Heart right ventricle (tissue), 16 donors: ENCODE measurements at regions of chr9 and their contacts with region 1.

Region 1: GRCh38 chr9:38107811-38108304 is 38.8 kb upstream of the SHB start:
- DNase-seq: no peak
- ATAC-seq: no peak
- H3K4me3 ChIP-seq: no peak overlapping the region
- H3K27ac ChIP-seq: no peak overlapping the region
- H3K4me1 ChIP-seq: peaks cover 0 to 6% (median 0%) of the 10 kb centered on the region in 9 donors
- H3K27me3 ChIP-seq: peaks cover 0 to 8% (median 0%) of the 10 kb centered on the region in 7 donors
- CTCF ChIP-seq: no peak

Region 2: GRCh38 chr9:38068866-38069629 is 38.8 kb before region 1 on chr9 and contains the start of gene SHB:
- intact Hi-C with region 1: no loop called
- DNase-seq: peak; percentile 82 to 88
- ATAC-seq: peak; percentile 68 to 87 (median 76)
- H3K4me3 ChIP-seq: peak within 1 kb of the TSS; percentile 78 to 99 (median 95)
- H3K27ac ChIP-seq: peak within 1 kb of the TSS; percentile 87 to 99 (median 98)
- H3K4me1 ChIP-seq: peaks cover 3 to 57% (median 44%) of the 10 kb centered on the region in 9 donors
- H3K27me3 ChIP-seq: peaks cover 0 to 16% (median 0%) of the 10 kb centered on the region in 7 donors
- CTCF ChIP-seq: peak in 5 of 9 donors; percentile 2 to 47 (median 25)
- total RNA-seq, gene SHB: 13.9 to 26.6 (median 18.0) TPM

Region 3: GRCh38 chr9:38079461-38080031 is 28.3 kb before region 1 on chr9:
- intact Hi-C with region 1: no loop called
- DNase-seq: no peak
- ATAC-seq: peak in 3 of 8 donors; percentile 39 to 50 (median 40)
- H3K4me3 ChIP-seq: no peak overlapping the region
- H3K27ac ChIP-seq: peak overlapping the region in 1 of 10 donors; percentile 65
- H3K4me1 ChIP-seq: peaks cover 0 to 49% (median 10%) of the 10 kb centered on the region in 9 donors
- H3K27me3 ChIP-seq: no peaks in the 10 kb centered on the region
- CTCF ChIP-seq: no peak

Region 4: DNA sequence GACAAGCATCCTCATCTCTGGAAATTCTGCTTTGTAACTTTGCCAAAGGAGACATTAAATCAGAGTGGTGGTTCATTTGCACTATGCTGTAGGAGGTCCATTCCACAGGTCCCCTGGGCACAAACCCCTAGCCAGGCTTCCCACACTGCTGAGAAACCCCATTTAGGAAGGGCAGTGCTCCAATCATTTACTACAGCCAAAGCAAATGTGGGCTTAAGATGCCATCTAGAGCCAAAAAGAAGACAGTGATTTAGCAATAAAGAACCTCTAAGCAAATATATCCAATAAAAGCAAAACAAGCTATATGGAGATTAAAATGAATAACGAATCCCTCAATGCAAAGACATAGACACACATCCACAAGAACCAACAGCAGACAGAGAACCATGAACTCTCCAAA is 155.7 kb after region 1 on chr9:
- intact Hi-C with region 1: no loop called
- DNase-seq: no peak
- ATAC-seq: no peak
- H3K4me3 ChIP-seq: no peak overlapping the region
- H3K27ac ChIP-seq: no peak overlapping the region
- H3K4me1 ChIP-seq: no peaks in the 10 kb centered on the region
- H3K27me3 ChIP-seq: no peaks in the 10 kb centered on the region
- CTCF ChIP-seq: peak in 3 of 9 donors; percentile 11 to 27 (median 26)

Region 5: DNA sequence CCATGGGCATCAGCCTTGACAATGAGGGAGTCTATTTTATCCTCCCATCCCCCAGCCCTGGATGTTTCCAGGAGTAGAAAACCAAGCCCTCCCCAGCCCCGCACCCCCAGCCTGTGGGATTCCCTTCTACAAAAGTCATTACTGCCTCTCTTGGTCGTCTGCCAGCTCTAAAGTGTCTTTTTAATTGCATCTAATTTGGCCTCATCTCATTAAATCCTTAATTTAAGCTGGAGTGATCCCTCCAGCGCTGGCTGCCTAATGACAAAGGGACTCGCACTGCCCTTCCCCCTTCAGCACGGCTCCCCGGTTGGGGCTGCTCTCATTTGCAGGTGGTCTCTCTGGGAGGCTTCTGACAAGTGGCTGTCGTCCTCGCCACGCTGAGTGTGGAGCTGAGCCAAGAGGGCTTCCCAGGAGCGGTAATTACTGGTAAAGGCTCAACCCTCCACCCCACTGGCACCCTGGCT is 176.8 kb after region 1 on chr9:
- intact Hi-C with region 1: loop called in 1 of 10 experiments (anchors 10 kb)
- DNase-seq: no peak
- ATAC-seq: no peak
- H3K4me3 ChIP-seq: no peak overlapping the region
- H3K27ac ChIP-seq: no peak overlapping the region
- H3K4me1 ChIP-seq: no peaks in the 10 kb centered on the region
- H3K27me3 ChIP-seq: peaks cover 0 to 15% (median 0%) of the 10 kb centered on the region in 7 donors
- CTCF ChIP-seq: no peak

Region 6: GRCh38 chr9:38482918-38483592 is 375.2 kb after region 1 on chr9:
- intact Hi-C with region 1: no loop called
- DNase-seq: no peak
- ATAC-seq: no peak
- H3K4me3 ChIP-seq: no peak overlapping the region
- H3K27ac ChIP-seq: no peak overlapping the region
- H3K4me1 ChIP-seq: no peaks in the 10 kb centered on the region
- H3K27me3 ChIP-seq: peaks cover 0 to 46% (median 20%) of the 10 kb centered on the region in 7 donors
- CTCF ChIP-seq: no peak